ENCODE measurements at regions of chr12 and their contacts with region 1.

Region 1: GRCh38 chr12:50174971-50175715 is 8.0 kb upstream of the CERS5 start:
- DNase-seq: peak in 1 of 4 donors; percentile 33
- ATAC-seq: peak; percentile 64
- H3K4me3 ChIP-seq: no peak overlapping the region
- H3K27ac ChIP-seq: no peak overlapping the region
- H3K4me1 ChIP-seq: no peaks in the 10 kb centered on the region
- H3K27me3 ChIP-seq: no peaks in the 10 kb centered on the region
- CTCF ChIP-seq: peak; percentile 33 to 79 (median 70)
- POLR2A ChIP-seq: no peak

Region 2: DNA sequence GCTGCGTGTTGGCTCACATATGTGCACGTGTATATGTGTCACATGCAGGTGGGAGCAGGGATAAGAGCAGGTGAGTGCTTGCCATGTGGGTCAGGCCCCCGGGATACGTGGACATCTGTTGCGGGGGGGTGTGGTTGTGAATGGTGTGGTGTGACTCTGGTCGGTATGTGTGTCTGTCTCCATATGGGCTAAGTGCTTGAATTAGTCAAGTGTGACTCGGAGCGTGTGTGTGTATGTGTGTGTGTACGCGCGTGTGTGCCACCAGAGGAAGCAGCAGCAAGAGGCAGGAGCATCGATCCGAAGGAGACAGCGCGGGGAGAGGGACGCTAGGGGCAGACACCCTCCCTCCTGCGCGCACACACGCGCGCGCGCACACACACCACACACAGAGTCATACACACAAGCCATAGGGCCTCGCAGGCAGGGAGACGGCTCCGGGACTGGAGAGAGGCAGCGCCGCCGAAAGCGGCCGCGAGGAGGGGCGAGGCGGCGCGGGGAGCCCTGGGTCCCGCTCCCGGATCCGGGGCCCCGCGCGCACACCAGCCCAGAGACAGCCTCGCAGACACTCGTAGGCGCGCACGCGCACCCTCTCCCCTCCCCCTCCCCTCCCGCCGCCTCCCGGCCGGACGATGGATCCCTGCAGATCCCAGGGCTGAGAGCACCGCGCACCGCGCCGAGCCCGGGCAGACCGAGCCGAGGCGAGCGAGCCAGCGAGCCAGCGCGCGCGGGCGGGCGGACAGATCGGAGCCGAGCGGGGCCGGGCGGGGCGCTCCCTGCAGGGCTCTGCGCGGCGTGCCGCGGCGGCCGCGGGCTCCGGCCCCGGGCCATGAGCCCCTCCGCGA is 117.9 kb before region 1 on chr12 and contains the start of gene ASIC1:
- intact Hi-C with region 1: no loop called
- DNase-seq: peak; percentile 62 to 76 (median 68)
- ATAC-seq: peak; percentile 75
- H3K4me3 ChIP-seq: peak within 1 kb of the TSS; percentile 41 to 42
- H3K27ac ChIP-seq: peak within 1 kb of the TSS in 1 of 4 donors; percentile 34
- H3K4me1 ChIP-seq: peaks cover 21% of the 10 kb centered on the region
- H3K27me3 ChIP-seq: peaks cover 0 to 10% of the 10 kb centered on the region in 2 donors
- CTCF ChIP-seq: peak in 2 of 7 experiments; percentile 10 to 24
- POLR2A ChIP-seq: peak in 1 of 3 donors; percentile 25
- total RNA-seq, gene ASIC1: 0.52 to 0.99 TPM

Region 3: GRCh38 chr12:50074936-50075807 is 100.0 kb before region 1 on chr12:
- intact Hi-C with region 1: loop called (anchors 5 kb)
- DNase-seq: peak; percentile 88 to 91 (median 90)
- ATAC-seq: peak; percentile 89
- H3K4me3 ChIP-seq: no peak overlapping the region
- H3K27ac ChIP-seq: no peak overlapping the region
- H3K4me1 ChIP-seq: peaks cover 6% of the 10 kb centered on the region
- H3K27me3 ChIP-seq: no peaks in the 10 kb centered on the region
- CTCF ChIP-seq: peak; percentile 79 to 96 (median 94)
- POLR2A ChIP-seq: no peak

Region 4: GRCh38 chr12:50132505-50133135 is 42.5 kb before region 1 on chr12:
- intact Hi-C with region 1: no loop called
- DNase-seq: no peak
- ATAC-seq: peak; percentile 42
- H3K4me3 ChIP-seq: no peak overlapping the region
- H3K27ac ChIP-seq: no peak overlapping the region
- H3K4me1 ChIP-seq: no peaks in the 10 kb centered on the region
- H3K27me3 ChIP-seq: no peaks in the 10 kb centered on the region
- CTCF ChIP-seq: peak in 5 of 7 experiments; percentile 24 to 70 (median 47)
- POLR2A ChIP-seq: no peak

Region 5: GRCh38 chr12:51994959-51995358 is 1819.8 kb after region 1 on chr12:
- intact Hi-C with region 1: no loop called
- DNase-seq: no peak
- ATAC-seq: no peak
- H3K4me3 ChIP-seq: no peak overlapping the region
- H3K27ac ChIP-seq: no peak overlapping the region
- H3K4me1 ChIP-seq: no peaks in the 10 kb centered on the region
- H3K27me3 ChIP-seq: no peaks in the 10 kb centered on the region
- CTCF ChIP-seq: no peak
- POLR2A ChIP-seq: no peak